ENCODE measurements at regions of chr13 and their contacts with region 1.

Region 1: GRCh38 chr13:27251166-27252091 is at the start of gene RPL21:
- DNase-seq: peak; percentile 94
- ATAC-seq: peak; percentile 94
- H3K4me3 Mint-ChIP-seq: peak within 1 kb of the TSS; percentile 97
- H3K27ac Mint-ChIP-seq: peak within 1 kb of the TSS; percentile 98
- H3K4me1 Mint-ChIP-seq: peaks cover 44% of the 10 kb centered on the region
- H3K27me3 Mint-ChIP-seq: no peaks in the 10 kb centered on the region
- total RNA-seq, gene RPL21: 756 to 1,682 TPM

Region 2: GRCh38 chr13:26221721-26222519 is 1029.5 kb before region 1 on chr13 and contains the start of gene RNF6:
- CTCF ChIA-PET with region 1: no interaction called
- POLR2A ChIA-PET with region 1: no interaction called
- intact Hi-C with region 1: loop called in 1 of 2 experiments (anchors 2 kb)
- DNase-seq: peak; percentile 90
- ATAC-seq: peak; percentile 98
- H3K4me3 Mint-ChIP-seq: peak within 1 kb of the TSS; percentile 100
- H3K27ac Mint-ChIP-seq: peak within 1 kb of the TSS; percentile 100
- H3K4me1 Mint-ChIP-seq: peaks cover 33% of the 10 kb centered on the region
- H3K27me3 Mint-ChIP-seq: no peaks in the 10 kb centered on the region
- total RNA-seq, gene RNF6: 37.0 to 42.4 TPM

Region 3: GRCh38 chr13:27012482-27013197 is 238.8 kb before region 1 on chr13:
- CTCF ChIA-PET with region 1: no interaction called
- POLR2A ChIA-PET with region 1: no interaction called
- intact Hi-C with region 1: no loop called
- DNase-seq: no peak
- ATAC-seq: peak; percentile 63
- H3K4me3 Mint-ChIP-seq: no peak overlapping the region
- H3K27ac Mint-ChIP-seq: no peak overlapping the region
- H3K4me1 Mint-ChIP-seq: no peaks in the 10 kb centered on the region
- H3K27me3 Mint-ChIP-seq: peaks cover 8% of the 10 kb centered on the region

Region 4: GRCh38 chr13:27024776-27025492 is 226.5 kb before region 1 on chr13:
- CTCF ChIA-PET with region 1: no interaction called
- POLR2A ChIA-PET with region 1: no interaction called
- intact Hi-C with region 1: no loop called
- DNase-seq: no peak
- ATAC-seq: no peak
- H3K4me3 Mint-ChIP-seq: no peak overlapping the region
- H3K27ac Mint-ChIP-seq: no peak overlapping the region
- H3K4me1 Mint-ChIP-seq: peaks cover 9% of the 10 kb centered on the region
- H3K27me3 Mint-ChIP-seq: peaks cover 18% of the 10 kb centered on the region

Region 5: DNA sequence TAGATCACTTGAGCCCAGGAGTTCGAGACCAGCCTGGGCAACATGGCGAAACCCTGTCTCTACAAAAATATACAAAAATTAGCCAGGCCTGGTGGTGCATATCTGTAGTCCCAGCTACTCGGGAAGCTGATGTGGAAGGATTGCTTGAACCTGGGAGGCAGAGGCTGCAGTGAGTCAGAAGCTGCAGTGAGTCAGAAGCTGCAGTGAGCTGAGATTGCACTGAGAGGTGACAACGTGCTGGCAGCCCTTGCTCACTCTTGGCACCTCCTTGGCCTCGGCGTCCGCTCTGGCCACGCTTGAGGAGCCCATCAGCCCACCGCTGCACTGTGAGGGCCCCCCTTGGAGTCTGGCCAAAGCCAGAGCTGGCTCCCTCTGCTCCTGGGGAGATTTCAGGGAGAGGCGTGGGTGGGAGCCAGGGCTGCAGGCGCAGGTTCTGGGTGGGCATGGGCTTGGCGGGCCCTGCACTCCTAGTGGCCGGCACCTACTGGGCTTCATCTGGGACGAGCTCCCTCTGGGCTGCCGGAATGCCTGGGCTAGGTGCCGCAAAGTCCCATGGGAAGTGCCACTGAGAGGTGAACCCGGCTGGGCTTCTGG is 39.6 kb before region 1 on chr13:
- CTCF ChIA-PET with region 1: no interaction called
- POLR2A ChIA-PET with region 1: no interaction called
- intact Hi-C with region 1: no loop called
- DNase-seq: no peak
- ATAC-seq: peak; percentile 36
- H3K4me3 Mint-ChIP-seq: no peak overlapping the region
- H3K27ac Mint-ChIP-seq: no peak overlapping the region
- H3K4me1 Mint-ChIP-seq: no peaks in the 10 kb centered on the region
- H3K27me3 Mint-ChIP-seq: no peaks in the 10 kb centered on the region

Region 6: GRCh38 chr13:27270594-27271520 is 19.4 kb after region 1 on chr13 and contains the start of gene RASL11A:
- CTCF ChIA-PET with region 1: interaction called, 14 read pairs
- POLR2A ChIA-PET with region 1: interaction called, 8 read pairs
- intact Hi-C with region 1: loop called (anchors 1 to 2 kb)
- DNase-seq: peak; percentile 82
- ATAC-seq: peak; percentile 91
- H3K4me3 Mint-ChIP-seq: peak within 1 kb of the TSS; percentile 79
- H3K27ac Mint-ChIP-seq: peak within 1 kb of the TSS; percentile 76
- H3K4me1 Mint-ChIP-seq: peaks cover 14% of the 10 kb centered on the region
- H3K27me3 Mint-ChIP-seq: peaks cover 2% of the 10 kb centered on the region
- total RNA-seq, gene RASL11A: 3.2 to 3.5 TPM

Region 7: GRCh38 chr13:27424246-27425157 is 173.1 kb after region 1 on chr13 and contains the start of gene GTF3A:
- CTCF ChIA-PET with region 1: no interaction called
- POLR2A ChIA-PET with region 1: no interaction called
- intact Hi-C with region 1: loop called (anchors 1 to 10 kb)
- DNase-seq: peak; percentile 92
- ATAC-seq: peak; percentile 66
- H3K4me3 Mint-ChIP-seq: peak within 1 kb of the TSS; percentile 80
- H3K27ac Mint-ChIP-seq: peak within 1 kb of the TSS; percentile 97
- H3K4me1 Mint-ChIP-seq: peaks cover 45% of the 10 kb centered on the region
- H3K27me3 Mint-ChIP-seq: no peaks in the 10 kb centered on the region
- total RNA-seq, gene GTF3A: 177 to 208 TPM

Region 8: GRCh38 chr13:27620377-27621115 is 369.1 kb after region 1 on chr13 and contains the start of gene LNX2:
- CTCF ChIA-PET with region 1: no interaction called
- POLR2A ChIA-PET with region 1: no interaction called
- intact Hi-C with region 1: loop called (anchors 1 to 5 kb)
- DNase-seq: peak; percentile 98
- ATAC-seq: peak; percentile 92
- H3K4me3 Mint-ChIP-seq: peak within 1 kb of the TSS; percentile 92
- H3K27ac Mint-ChIP-seq: peak within 1 kb of the TSS; percentile 91
- H3K4me1 Mint-ChIP-seq: peaks cover 51% of the 10 kb centered on the region
- H3K27me3 Mint-ChIP-seq: no peaks in the 10 kb centered on the region
- total RNA-seq, gene LNX2: 4.7 to 4.8 TPM

Measured in activated CD4-positive, alpha-beta T cell treated with anti-CD3 and anti-CD28 coated beads for 36 hours (primary cell).